CD4-positive, alpha-beta memory T cell (primary cell): ENCODE measurements at regions of chr11 and their contacts with region 1.

Region 1: GRCh38 chr11:124953753-124954589 is at the start of gene CCDC15:
- DNase-seq: peak; percentile 91 to 95 (median 93)
- H3K4me3 ChIP-seq: peak within 1 kb of the TSS; percentile 33 to 63
- H3K4me3 Mint-ChIP-seq: peak within 1 kb of the TSS in 1 of 8 donors; percentile 32
- H3K27ac ChIP-seq: peak within 1 kb of the TSS; percentile 71
- H3K27ac Mint-ChIP-seq: no peak within 1 kb of the TSS
- H3K4me1 ChIP-seq: peaks cover 50% of the 10 kb centered on the region
- H3K4me1 Mint-ChIP-seq: peaks cover 0 to 12% (median 7%) of the 10 kb centered on the region in 4 donors
- H3K27me3 ChIP-seq: no peaks in the 10 kb centered on the region
- H3K27me3 Mint-ChIP-seq: no peaks in the 10 kb centered on the region
- total RNA-seq, gene CCDC15: 2.6 to 2.7 TPM

Region 2: GRCh38 chr11:124673333-124674167 is 280.4 kb before region 1 on chr11 and contains the starts of genes SIAE and SPA17:
- CTCF ChIA-PET with region 1: interaction called, 3 read pairs
- POLR2A ChIA-PET with region 1: interaction called, 4 read pairs
- intact Hi-C with region 1: loop called (anchors 5 kb)
- DNase-seq: peak; percentile 84 to 91 (median 88)
- H3K4me3 ChIP-seq: peak within 1 kb of the TSS; percentile 39 to 73
- H3K4me3 Mint-ChIP-seq: peak within 1 kb of the TSS; percentile 90 to 95 (median 91)
- H3K27ac ChIP-seq: peak within 1 kb of the TSS; percentile 66
- H3K27ac Mint-ChIP-seq: peak within 1 kb of the TSS; percentile 98 to 99 (median 99)
- H3K4me1 ChIP-seq: peaks cover 42% of the 10 kb centered on the region
- H3K4me1 Mint-ChIP-seq: peaks cover 16 to 43% (median 32%) of the 10 kb centered on the region in 4 donors
- H3K27me3 ChIP-seq: peaks cover 5% of the 10 kb centered on the region
- H3K27me3 Mint-ChIP-seq: no peaks in the 10 kb centered on the region
- total RNA-seq, gene SIAE: 4.2 to 4.8 TPM
- total RNA-seq, gene SPA17: 0.55 to 0.81 TPM

Region 3: DNA sequence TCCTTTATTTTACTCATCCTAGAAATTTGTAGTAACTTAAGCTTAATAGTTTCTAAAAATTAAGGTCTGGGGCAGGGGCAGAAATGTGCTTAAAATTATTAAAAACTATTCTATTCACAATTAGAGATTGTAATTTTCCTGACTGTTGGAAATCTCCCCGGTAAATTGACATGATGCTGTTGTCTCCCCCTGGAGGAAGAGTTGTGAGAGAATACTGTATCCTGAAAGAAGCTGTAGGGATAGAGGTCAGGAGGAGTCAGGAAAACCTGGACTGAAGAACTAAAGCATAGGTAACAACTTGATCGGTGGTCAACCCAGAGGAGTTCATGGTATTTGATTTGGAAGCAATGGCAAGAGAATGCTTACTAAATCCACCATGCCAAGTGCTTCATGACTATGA is 175.7 kb before region 1 on chr11:
- CTCF ChIA-PET with region 1: no interaction called
- POLR2A ChIA-PET with region 1: no interaction called
- intact Hi-C with region 1: no loop called
- DNase-seq: no peak
- H3K4me3 ChIP-seq: no peak overlapping the region
- H3K4me3 Mint-ChIP-seq: no peak overlapping the region
- H3K27ac ChIP-seq: no peak overlapping the region
- H3K27ac Mint-ChIP-seq: no peak overlapping the region
- H3K4me1 ChIP-seq: peaks cover 10% of the 10 kb centered on the region
- H3K4me1 Mint-ChIP-seq: peaks cover 15 to 19% (median 16%) of the 10 kb centered on the region in 4 donors
- H3K27me3 ChIP-seq: no peaks in the 10 kb centered on the region
- H3K27me3 Mint-ChIP-seq: no peaks in the 10 kb centered on the region

Region 4: GRCh38 chr11:124920870-124921609 is 32.9 kb before region 1 on chr11:
- CTCF ChIA-PET with region 1: interaction called, 8 read pairs
- POLR2A ChIA-PET with region 1: interaction called, 17 read pairs
- intact Hi-C with region 1: loop called (anchors 2 kb)
- DNase-seq: peak; percentile 68 to 78 (median 71)
- H3K4me3 ChIP-seq: peak overlapping the region in 1 of 2 donors; percentile 62
- H3K4me3 Mint-ChIP-seq: peak overlapping the region; percentile 74 to 88 (median 80)
- H3K27ac ChIP-seq: no peak overlapping the region
- H3K27ac Mint-ChIP-seq: peak overlapping the region in 4 of 7 donors; percentile 47 to 65 (median 53)
- H3K4me1 ChIP-seq: peaks cover 14% of the 10 kb centered on the region
- H3K4me1 Mint-ChIP-seq: peaks cover 15 to 28% (median 23%) of the 10 kb centered on the region in 4 donors
- H3K27me3 ChIP-seq: no peaks in the 10 kb centered on the region
- H3K27me3 Mint-ChIP-seq: peaks cover 0 to 3% of the 10 kb centered on the region in 2 donors

Region 5: DNA sequence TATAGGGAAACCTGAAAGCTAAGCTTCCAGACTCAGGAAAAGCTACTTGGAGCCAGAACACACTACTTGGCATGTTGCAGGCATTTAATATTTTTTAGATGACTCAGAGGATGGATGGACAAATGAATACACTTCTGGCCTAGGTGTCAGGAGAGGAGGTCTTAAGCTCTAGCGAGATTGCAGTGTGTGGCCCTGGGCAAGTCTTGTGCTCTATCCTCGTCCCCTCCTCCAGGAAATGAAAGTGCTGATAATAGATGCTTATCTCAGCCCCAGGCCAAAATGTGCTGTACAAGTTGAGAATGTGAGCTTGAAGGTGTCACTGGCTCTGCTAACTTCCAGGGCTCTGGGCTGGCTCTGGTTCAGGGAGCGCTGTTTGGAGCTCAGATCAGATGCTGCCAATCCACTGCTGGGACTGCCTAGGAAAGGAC is 346.8 kb after region 1 on chr11:
- CTCF ChIA-PET with region 1: no interaction called
- POLR2A ChIA-PET with region 1: no interaction called
- intact Hi-C with region 1: no loop called
- DNase-seq: no peak
- H3K4me3 ChIP-seq: no peak overlapping the region
- H3K4me3 Mint-ChIP-seq: no peak overlapping the region
- H3K27ac ChIP-seq: no peak overlapping the region
- H3K27ac Mint-ChIP-seq: no peak overlapping the region
- H3K4me1 ChIP-seq: no peaks in the 10 kb centered on the region
- H3K4me1 Mint-ChIP-seq: no peaks in the 10 kb centered on the region
- H3K27me3 ChIP-seq: no peaks in the 10 kb centered on the region
- H3K27me3 Mint-ChIP-seq: peaks cover 1 to 4% of the 10 kb centered on the region in 2 donors

Region 6: DNA sequence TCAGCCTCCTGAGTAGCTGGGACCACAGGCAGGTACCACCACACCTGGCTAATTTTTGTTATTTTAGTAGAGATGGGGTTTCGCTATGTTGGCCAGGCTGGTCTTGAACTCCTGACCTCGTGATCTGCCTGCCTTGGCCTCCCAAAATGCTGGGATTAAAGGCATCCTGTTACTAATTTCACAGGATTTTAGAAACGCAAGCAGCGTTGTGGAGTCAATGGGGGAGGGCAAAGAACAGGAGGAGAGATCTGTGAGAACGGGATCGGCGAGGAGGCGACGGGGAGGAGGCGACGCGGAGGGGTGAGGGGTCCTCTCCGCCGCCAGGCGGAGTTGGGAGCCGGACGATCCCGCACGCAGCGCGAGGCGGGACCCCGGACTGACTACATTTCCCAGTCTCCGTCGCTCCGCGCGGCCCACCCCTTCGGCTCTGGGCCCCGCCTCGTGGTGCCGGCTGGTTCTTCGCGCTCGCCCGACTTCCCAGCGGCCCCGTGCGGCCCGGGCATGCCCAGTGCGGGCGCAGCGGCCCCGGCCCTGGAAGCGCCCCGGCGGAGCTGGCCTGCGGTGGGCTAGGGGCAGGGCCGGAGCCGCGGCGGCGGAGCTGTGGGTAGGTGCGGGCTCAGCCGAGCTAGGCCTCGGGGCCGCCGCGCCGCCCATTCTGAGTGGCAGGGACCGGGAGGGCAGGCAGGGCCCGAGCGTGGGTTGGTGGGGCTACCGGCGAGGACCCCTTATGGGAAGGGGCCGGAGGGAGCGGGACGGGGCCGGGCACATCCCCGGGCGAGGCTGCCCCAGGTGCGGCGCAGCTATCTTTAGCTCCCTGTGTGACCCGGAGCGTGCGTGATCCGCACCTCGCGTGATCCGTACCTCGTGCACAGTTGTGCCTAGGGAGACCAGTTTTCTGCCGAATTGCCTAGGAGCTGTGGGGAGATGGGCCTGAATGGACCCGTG is 615.3 kb after region 1 on chr11 and contains the start of gene EI24:
- CTCF ChIA-PET with region 1: no interaction called
- POLR2A ChIA-PET with region 1: interaction called, 9 read pairs
- intact Hi-C with region 1: loop called (anchors 5 kb)
- DNase-seq: peak; percentile 83 to 86 (median 85)
- H3K4me3 ChIP-seq: peak within 1 kb of the TSS; percentile 84 to 93
- H3K4me3 Mint-ChIP-seq: peak within 1 kb of the TSS; percentile 88 to 95 (median 93)
- H3K27ac ChIP-seq: peak within 1 kb of the TSS; percentile 81
- H3K27ac Mint-ChIP-seq: peak within 1 kb of the TSS; percentile 85 to 97 (median 94)
- H3K4me1 ChIP-seq: peaks cover 25% of the 10 kb centered on the region
- H3K4me1 Mint-ChIP-seq: peaks cover 13 to 32% (median 18%) of the 10 kb centered on the region in 4 donors
- H3K27me3 ChIP-seq: no peaks in the 10 kb centered on the region
- H3K27me3 Mint-ChIP-seq: peaks cover 0 to 1% of the 10 kb centered on the region in 2 donors
- total RNA-seq, gene EI24: 35.5 to 36.8 TPM

Region 7: DNA sequence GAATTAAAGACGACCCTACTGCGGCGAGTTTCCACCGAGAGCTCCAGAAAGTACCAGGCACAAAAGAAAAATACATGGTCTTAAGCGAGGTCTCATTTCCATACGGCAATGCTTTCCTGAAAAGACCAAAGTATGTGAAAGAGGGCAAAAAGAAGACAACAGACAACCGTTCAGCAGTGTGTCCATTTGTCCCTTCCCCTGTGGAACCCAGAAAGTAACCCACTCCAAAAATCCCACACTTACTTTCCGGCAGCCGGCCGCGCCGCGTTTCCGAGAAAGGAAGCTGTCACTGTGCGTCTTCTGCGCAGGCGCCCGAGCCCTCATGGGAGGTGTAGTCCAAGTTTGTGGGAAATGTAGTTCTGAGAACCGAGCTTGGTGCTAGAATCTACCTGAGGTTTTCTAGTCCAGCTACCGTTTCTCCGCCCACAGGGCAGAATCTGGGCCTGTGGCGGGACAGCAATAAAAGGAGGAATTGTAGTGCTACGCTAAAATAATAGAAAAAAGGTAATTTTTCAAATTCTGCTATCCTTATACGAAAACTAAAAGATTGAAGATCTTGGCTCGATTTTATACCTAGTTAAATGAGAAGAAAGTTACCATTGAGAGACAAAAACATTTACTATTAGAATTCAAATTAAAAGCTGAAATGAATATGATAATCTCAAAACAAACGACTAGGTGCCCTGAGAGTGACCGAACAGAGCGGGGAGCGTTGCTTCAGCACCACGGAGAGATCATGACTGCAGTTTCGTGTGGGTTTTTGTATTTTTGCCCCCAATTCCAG is 949.1 kb after region 1 on chr11 and contains the start of gene PUS3:
- CTCF ChIA-PET with region 1: no interaction called
- POLR2A ChIA-PET with region 1: no interaction called
- intact Hi-C with region 1: loop called (anchors 5 kb)
- DNase-seq: peak; percentile 83 to 88 (median 84)
- H3K4me3 ChIP-seq: peak within 1 kb of the TSS; percentile 45 to 58
- H3K4me3 Mint-ChIP-seq: peak within 1 kb of the TSS; percentile 92 to 97 (median 95)
- H3K27ac ChIP-seq: peak within 1 kb of the TSS; percentile 81
- H3K27ac Mint-ChIP-seq: peak within 1 kb of the TSS; percentile 88 to 96 (median 92)
- H3K4me1 ChIP-seq: peaks cover 18% of the 10 kb centered on the region
- H3K4me1 Mint-ChIP-seq: peaks cover 20 to 49% (median 37%) of the 10 kb centered on the region in 4 donors
- H3K27me3 ChIP-seq: peaks cover 12% of the 10 kb centered on the region
- H3K27me3 Mint-ChIP-seq: peaks cover 19 to 22% of the 10 kb centered on the region in 2 donors
- total RNA-seq, gene PUS3: 12.4 to 12.6 TPM